ENCODE measurements at regions of chr1 and their contacts with region 1.

Region 1: DNA sequence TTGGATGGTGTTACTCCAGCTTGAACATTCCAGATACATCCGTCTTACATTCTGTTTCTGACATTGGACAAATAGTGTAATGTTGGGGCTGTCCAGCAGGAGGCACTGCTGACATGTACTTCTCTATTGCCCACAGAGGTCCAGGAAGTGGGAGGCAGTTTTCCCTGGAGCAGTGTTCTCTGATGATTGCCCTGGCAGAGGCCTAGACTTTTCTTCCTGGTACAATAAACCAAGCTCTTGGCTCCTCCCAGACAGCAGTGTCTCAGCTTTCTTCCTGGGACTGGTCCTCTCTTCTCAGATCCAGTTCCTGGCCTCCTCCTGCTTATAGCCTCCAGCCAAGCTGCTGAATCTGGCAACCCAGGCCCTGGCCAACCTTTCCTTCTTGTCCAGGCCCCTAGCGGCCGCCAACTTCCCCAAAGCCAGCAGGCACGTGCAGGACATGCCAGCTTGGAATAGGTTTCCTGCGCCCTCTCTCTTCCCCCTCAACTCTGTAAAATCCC is 14.9 kb upstream of the IFNLR1 start:
- DNase-seq: peak; percentile 68
- ATAC-seq: peak; percentile 73
- H3K4me3 ChIP-seq: no peak overlapping the region
- H3K27ac ChIP-seq: no peak overlapping the region
- H3K4me1 ChIP-seq: peaks cover 20% of the 10 kb centered on the region
- H3K27me3 ChIP-seq: peaks cover 0 to 1% of the 10 kb centered on the region in 2 experiments; a peak in 3 of 5 replicates
- CTCF ChIP-seq: peak; percentile 90
- EP300 ChIP-seq: no peak
- POLR2A ChIP-seq: no peak
- RAD21 ChIP-seq: peak; percentile 68

Region 2: DNA sequence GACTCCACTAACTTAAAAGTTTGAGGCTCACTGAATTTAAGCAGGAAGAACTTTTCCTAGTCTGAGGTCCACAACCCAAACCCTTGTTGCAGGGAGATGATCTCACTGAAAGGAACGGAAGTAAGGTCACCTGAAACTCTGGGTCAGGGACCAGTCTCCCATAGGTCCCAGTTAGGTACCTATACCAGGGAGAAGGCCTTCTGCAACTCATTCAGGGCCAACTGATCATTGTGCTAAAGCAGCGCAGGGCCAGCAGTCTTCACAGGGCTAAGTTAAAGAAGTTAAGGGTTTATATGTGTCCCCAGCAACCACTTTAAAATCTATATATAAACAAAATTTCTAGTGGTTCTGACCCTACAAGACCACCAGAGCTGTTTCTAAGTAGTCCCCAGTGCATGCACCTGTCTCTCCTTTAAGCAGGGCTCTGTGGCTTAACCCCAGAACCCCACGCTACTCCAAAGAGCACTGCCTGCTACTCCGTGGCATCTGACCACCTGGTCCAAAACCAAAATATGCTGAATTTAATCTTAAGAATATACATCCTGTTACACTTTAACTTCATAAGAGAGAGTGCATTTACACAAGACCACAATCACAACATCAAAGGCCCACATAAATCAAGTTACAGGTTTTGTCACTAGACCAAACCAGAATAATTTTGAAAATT is 224.7 kb before region 1 on chr1:
- CTCF ChIA-PET with region 1: no interaction called
- POLR2A ChIA-PET with region 1: no interaction called
- in situ Hi-C with region 1: no loop called
- intact Hi-C with region 1: no loop called
- DNase-seq: no peak
- ATAC-seq: no peak
- H3K4me3 ChIP-seq: peak overlapping the region; percentile 91 to 96 (median 93)
- H3K27ac ChIP-seq: peak overlapping the region; percentile 98
- H3K4me1 ChIP-seq: peaks cover 63% of the 10 kb centered on the region
- H3K27me3 ChIP-seq: no peaks in the 10 kb centered on the region; a peak in 1 of 5 replicates
- CTCF ChIP-seq: no peak
- EP300 ChIP-seq: no peak
- POLR2A ChIP-seq: no peak
- RAD21 ChIP-seq: no peak

Region 3: GRCh38 chr1:24235921-24236781 is 34.2 kb after region 1 on chr1:
- CTCF ChIA-PET with region 1: no interaction called
- POLR2A ChIA-PET with region 1: no interaction called
- in situ Hi-C with region 1: no loop called
- intact Hi-C with region 1: no loop called
- DNase-seq: no peak
- ATAC-seq: peak; percentile 35; the same call in 2 of the 3 replicates
- H3K4me3 ChIP-seq: no peak overlapping the region
- H3K27ac ChIP-seq: no peak overlapping the region
- H3K4me1 ChIP-seq: no peaks in the 10 kb centered on the region
- H3K27me3 ChIP-seq: peaks cover 0 to 20% of the 10 kb centered on the region in 2 experiments; a peak in 2 of 5 replicates
- CTCF ChIP-seq: no peak
- EP300 ChIP-seq: no peak
- POLR2A ChIP-seq: no peak
- RAD21 ChIP-seq: no peak

Region 4: GRCh38 chr1:24289937-24290595 is 88.1 kb after region 1 on chr1:
- CTCF ChIA-PET with region 1: no interaction called
- POLR2A ChIA-PET with region 1: no interaction called
- in situ Hi-C with region 1: no loop called
- intact Hi-C with region 1: loop called (anchors 10 kb)
- DNase-seq: no peak
- ATAC-seq: no peak
- H3K4me3 ChIP-seq: no peak overlapping the region
- H3K27ac ChIP-seq: no peak overlapping the region
- H3K4me1 ChIP-seq: 0 out of 2 replicates have a peak, but pooled peaks cover 6% of the 10 kb centered on the region
- H3K27me3 ChIP-seq: peaks cover 3 to 30% of the 10 kb centered on the region in 2 experiments; a peak in 3 of 5 replicates
- CTCF ChIP-seq: no peak
- EP300 ChIP-seq: no peak
- POLR2A ChIP-seq: no peak
- RAD21 ChIP-seq: no peak

Region 5: DNA sequence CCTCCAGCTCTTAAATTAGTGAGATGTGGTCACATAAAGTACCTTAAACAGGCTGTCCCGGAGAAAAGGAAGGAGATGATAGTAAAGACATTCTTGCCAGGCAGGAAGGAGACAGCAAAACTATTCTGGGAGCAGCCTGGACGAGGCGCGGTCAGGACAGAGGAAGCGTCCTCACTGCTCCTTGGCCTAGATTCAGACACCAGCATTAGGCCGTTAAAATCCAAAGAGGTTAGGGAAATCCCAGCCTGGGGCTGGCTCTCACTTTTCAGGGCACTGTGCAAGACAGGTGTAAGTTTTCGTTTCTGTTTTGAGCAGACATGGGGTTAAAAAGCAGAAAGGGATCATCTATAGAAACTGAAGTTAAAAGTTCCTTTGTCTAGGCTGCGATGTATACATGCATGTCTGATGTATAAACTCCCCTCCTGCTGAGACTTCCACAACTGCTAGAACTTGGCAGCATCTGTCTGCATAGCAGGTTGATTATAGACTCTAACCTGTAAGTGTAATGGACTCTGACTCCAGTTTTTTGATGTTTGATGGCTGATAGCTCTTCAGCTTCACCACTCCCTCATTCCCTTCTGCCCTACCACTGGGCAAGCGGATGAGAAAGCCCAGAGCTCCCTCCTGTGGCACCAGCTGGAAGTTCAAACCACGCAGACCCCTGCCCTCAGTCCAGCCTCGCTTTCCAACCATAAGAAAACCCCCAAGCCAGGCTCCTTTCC is 190.1 kb after region 1 on chr1:
- CTCF ChIA-PET with region 1: interaction called, 151 read pairs
- POLR2A ChIA-PET with region 1: interaction called, 3 read pairs
- in situ Hi-C with region 1: loop called (anchors 5 kb)
- intact Hi-C with region 1: loop called (anchors 1 kb)
- DNase-seq: peak; percentile 47
- ATAC-seq: peak; percentile 92
- H3K4me3 ChIP-seq: no peak overlapping the region
- H3K27ac ChIP-seq: no peak overlapping the region
- H3K4me1 ChIP-seq: peaks cover 23% of the 10 kb centered on the region
- H3K27me3 ChIP-seq: no peaks in the 10 kb centered on the region
- CTCF ChIP-seq: peak; percentile 90
- EP300 ChIP-seq: no peak
- POLR2A ChIP-seq: no peak
- RAD21 ChIP-seq: peak; percentile 65

Region 6: GRCh38 chr1:24635195-24635843 is 433.3 kb after region 1 on chr1:
- CTCF ChIA-PET with region 1: interaction called, 3 read pairs
- POLR2A ChIA-PET with region 1: no interaction called
- in situ Hi-C with region 1: no loop called
- intact Hi-C with region 1: loop called (anchors 10 kb)
- DNase-seq: peak; percentile 72
- ATAC-seq: peak; percentile 74
- H3K4me3 ChIP-seq: no peak overlapping the region
- H3K27ac ChIP-seq: no peak overlapping the region
- H3K4me1 ChIP-seq: peaks cover 35% of the 10 kb centered on the region
- H3K27me3 ChIP-seq: no peaks in the 10 kb centered on the region
- CTCF ChIP-seq: peak; percentile 85
- EP300 ChIP-seq: no peak
- POLR2A ChIP-seq: no peak
- RAD21 ChIP-seq: peak; percentile 72